Thyroid gland (tissue), 4 donors: ENCODE measurements at regions of chr1 and their contacts with region 1.

Region 1: GRCh38 chr1:46223472-46223943 is 20.4 kb downstream of the LURAP1 start:
- DNase-seq: peak; percentile 78 to 80
- H3K4me3 ChIP-seq: no peak overlapping the region
- H3K27ac ChIP-seq: no peak overlapping the region
- H3K4me1 ChIP-seq: peaks cover 3 to 5% of the 10 kb centered on the region in 2 donors
- H3K27me3 ChIP-seq: no peaks in the 10 kb centered on the region
- CTCF ChIP-seq: peak; percentile 84 to 98 (median 90)
- POLR2A ChIP-seq: no peak

Region 2: DNA sequence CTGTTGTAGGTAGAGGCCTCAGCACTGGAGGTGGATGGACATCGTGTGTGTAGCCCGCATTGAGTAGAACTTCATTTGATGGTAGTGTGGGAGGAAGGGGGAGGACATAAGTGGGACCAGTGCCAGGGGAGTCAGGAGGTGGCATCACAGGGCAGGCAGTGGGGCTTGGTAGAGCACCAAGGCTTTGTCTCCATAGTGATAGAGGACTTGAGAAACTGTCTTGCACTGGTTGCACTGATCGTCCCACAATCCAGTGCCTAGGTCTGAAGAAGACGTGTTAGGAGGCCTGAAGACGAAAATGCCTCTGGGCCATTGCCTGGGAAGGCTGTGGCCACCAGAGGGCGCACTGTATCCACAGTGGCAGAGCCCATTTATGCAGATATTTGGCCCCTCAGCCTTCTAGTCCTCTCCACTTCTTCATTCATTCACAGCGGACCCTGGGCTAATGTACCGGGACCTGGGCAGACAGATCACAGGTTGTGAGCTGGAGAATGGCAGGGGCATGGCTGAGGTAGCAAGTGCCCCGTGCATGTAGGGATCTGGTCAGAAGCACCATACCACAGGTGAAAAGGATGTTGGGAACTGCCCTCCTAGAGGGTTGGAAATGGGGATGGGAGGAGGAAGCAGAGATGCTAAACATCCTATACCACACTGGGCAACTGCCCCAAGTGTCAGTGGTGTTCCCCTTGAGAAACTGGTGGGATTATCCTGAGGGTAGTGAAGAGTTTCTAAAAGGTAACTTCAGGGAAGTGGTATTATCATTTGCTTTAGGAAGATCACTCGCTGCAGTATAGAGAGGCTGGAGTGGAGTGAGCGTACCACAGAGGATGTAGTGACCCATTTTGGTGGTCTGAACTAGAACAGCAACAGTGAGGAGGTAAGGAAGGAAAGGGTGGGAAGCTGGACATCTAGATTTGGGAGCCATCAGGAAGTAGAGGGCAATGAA is 186.3 kb before region 1 on chr1:
- intact Hi-C with region 1: loop called (anchors 2 kb)
- DNase-seq: peak; percentile 89 to 90
- H3K4me3 ChIP-seq: no peak overlapping the region
- H3K27ac ChIP-seq: no peak overlapping the region
- H3K4me1 ChIP-seq: peaks cover 23 to 54% of the 10 kb centered on the region in 2 donors
- H3K27me3 ChIP-seq: no peaks in the 10 kb centered on the region
- CTCF ChIP-seq: peak; percentile 90 to 97 (median 96)
- POLR2A ChIP-seq: no peak